Right ventricle myocardium inferior (tissue), 1 donor: ENCODE measurements at regions of chr3 and their contacts with region 1.

Region 1: GRCh38 chr3:44477312-44478030 is at the start of gene ZNF445:
- DNase-seq: peak; percentile 94
- ATAC-seq: peak; percentile 97
- total RNA-seq, gene ZNF445: 12.7 TPM

Region 2: DNA sequence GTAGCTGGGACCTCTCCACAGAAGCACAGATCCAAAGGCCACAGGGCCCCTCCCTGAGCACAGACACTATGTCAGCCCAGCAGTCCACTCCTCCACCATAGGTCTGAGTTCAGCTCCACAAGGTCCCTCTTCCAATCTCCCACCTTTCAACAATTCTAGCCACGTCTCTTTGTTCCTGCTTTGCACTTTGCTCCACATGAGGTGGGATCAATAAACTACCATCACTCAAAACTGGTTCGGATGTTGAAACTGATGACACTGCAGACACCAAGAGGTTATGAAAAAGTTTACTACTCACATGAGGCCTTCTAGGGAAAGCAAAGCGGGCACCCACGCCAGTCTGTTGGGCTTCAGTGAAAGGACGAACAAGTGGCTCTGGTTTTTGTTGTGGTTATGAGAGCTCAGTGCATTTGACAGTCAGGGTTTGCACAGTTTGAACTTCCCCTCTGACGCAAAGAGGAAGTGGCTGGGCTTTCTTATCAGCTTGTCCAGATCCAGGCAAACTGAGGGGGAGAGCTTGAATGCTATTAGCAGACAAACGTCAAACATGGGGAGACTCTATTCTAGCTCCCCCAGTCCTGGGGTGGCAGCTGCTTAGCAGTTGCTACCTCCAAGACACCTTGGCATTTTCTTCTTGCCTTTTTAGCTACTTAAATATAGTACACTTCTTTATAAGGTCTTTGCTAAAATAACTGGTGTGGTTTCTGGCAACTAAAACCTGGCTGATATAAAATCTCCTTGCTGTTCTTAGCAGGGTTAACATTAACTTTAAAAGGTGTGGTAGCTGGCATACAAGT is 37.8 kb before region 1 on chr3:
- intact Hi-C with region 1: loop called (anchors 2 kb)
- DNase-seq: peak; percentile 88
- ATAC-seq: peak; percentile 95